ENCODE measurements at regions of chr13 and their contacts with region 1.

Region 1: DNA sequence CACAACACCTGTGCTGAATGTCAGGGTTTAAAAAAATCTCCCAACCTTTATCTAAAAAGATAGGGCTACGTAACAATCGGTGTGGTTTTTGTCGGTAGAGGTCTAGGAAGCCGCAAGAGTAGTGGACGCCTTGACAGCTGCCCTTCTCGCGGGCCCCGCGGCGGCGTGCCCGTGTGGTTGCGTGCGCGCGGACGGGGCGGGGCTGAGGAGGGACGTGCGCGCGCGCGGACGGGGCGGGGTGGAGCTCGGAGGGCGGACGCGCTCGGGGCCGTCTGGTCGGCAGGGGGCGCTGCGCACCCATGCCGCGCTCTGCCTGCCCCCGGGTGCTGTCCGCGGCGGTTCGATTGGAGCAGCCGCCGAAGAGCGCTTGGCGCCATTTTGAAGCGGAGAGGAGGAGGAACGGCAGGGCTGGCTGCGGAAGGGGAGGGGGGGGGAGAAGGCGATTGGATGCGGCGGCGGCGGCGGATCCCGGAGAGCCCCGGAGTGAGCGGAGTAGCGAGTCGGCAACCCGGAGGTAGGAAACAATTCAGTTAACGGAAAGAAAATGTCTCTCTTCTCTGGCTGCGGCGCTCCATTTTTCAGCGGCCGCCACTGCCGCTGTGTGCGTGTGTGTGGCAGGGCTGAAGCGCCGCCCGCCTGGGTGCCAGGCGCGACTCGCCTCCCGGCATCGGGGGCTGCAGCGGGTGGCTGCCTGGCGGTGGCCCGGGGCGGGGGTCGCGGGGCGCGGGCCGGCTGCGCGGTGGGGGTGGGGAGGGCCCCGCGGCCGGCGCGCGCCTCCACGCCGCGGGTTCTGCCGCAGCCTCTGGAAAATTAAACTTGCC is at the start of gene PDS5B:
- DNase-seq: peak; percentile 88 to 99 (median 92)

Region 2: GRCh38 chr13:31909864-31910551 is 676.3 kb before region 1 on chr13:
- intact Hi-C with region 1: loop called (anchors 10 kb)
- DNase-seq: peak in 6 of 10 donors; percentile 22 to 87 (median 54)

Region 3: DNA sequence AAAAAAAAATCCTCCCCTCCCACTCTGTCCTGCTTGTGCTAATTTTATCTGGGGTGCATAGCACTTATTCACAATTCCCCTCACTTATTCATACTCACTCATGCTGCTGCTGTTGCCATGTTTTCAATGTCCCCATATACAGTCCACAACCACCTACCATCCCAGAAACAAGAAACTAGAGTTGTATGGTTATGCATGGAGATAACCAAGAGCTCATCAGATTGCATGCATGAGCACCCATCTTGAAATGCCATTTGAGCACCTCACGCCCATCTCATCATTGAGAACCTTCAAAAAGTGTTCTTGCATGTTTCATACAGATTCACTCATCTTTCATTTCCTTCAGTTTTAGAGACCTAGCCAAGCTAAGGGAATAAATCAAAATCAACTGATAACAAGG is 32.6 kb before region 1 on chr13:
- intact Hi-C with region 1: no loop called
- DNase-seq: no peak

Region 4: DNA sequence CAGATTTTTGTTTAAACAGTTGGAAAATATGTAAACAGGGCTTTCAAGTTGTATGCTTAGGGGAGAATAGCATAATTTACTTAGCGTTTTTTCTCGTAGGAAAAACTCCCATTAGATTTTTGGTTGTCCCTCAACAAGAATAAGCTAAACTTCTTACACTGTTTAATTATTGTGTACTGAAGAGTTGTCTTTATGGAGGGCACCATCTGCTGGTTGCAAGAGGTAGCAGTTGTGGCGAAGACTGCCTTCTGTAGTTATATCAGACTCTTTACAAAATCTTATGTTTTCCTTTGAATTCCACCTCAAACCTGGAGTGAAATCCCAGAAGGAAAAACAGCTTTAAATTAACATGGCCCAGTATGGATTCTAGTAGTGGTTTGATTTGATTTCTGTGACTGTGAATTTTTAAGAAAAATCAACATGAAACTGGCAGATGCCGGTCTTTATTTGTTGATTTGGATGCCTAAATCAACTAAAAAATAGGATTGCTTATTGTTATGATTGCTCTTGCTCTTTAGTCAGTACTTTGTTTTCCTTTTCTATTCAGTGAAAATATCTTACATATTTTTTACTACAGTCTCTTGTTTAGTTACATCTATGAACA is 53.3 kb after region 1 on chr13:
- intact Hi-C with region 1: loop called (anchors 1 kb)
- DNase-seq: peak in 6 of 10 donors; percentile 32 to 90 (median 58)

Region 5: GRCh38 chr13:32650705-32651311 is 64.5 kb after region 1 on chr13:
- intact Hi-C with region 1: loop called (anchors 2 kb)
- DNase-seq: peak in 4 of 10 donors; percentile 19 to 59 (median 40)

Region 6: DNA sequence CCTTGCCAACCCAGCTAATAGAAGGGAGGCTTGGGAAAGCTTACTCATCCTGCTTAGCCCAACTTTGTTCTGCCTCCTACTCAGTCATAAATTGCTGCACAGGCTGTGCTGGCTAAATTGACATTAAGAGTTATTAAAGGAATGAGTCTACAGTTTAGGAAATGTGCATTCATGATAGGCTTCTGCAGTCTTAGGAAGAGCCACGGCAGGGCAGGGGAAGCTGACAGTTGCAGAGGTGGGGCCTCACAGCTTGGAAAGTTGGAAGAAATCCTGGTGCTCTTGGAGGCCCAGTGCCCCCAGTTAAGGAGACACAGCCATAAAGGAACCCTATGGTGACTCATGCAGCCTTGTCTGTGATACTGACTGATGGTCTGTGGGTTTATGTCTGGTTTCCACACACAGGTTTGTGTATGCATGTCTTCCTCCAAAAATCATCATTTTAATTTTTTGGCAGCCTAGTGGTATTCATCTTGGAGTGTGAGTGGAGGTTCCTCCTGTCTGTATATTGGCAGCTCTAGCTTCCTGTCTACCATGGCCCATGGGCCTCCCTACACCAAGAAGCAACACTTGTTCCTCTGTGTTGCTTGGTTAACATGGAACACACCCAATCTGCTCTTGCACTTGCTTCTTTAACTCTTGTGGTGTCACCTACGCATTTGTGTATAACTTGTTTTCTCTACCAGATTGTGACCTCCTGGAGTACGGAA is 294.9 kb after region 1 on chr13:
- intact Hi-C with region 1: no loop called
- DNase-seq: peak in 1 of 10 donors; percentile 78

Region 7: DNA sequence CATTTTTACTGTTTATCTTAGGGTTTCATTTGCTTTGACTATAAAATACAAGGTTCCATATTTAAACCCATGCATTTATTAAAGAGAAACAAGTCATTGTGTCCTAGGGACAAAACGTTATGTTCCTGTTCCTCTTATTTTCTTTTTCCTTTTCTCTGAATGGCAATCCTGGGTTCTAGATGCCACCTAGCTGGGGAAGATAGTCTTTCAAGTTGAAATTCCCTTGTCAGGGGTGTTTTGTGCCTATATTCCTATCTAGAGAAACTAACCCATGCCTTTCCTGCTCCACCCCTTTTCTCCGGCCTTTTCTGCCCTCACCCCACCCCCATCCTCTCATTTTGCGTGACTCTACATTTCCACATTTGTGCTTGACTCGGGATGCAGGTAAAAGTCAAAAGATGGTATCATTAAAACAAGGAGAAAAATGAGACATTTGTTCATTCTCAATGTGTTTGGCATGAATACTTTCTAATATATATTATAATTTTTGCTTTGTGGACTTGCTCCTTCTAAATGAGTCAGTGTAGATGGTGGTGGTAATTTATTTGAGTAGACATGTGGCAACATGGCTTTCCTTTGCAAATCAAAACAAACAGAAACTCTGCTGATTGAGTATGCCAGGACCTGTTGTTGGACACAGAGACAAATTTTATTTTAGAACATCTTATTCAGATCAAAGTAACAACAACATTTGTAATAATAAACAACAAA is 726.0 kb after region 1 on chr13:
- intact Hi-C with region 1: loop called (anchors 2 kb)
- DNase-seq: peak in 1 of 10 donors; percentile 52

Region 8: DNA sequence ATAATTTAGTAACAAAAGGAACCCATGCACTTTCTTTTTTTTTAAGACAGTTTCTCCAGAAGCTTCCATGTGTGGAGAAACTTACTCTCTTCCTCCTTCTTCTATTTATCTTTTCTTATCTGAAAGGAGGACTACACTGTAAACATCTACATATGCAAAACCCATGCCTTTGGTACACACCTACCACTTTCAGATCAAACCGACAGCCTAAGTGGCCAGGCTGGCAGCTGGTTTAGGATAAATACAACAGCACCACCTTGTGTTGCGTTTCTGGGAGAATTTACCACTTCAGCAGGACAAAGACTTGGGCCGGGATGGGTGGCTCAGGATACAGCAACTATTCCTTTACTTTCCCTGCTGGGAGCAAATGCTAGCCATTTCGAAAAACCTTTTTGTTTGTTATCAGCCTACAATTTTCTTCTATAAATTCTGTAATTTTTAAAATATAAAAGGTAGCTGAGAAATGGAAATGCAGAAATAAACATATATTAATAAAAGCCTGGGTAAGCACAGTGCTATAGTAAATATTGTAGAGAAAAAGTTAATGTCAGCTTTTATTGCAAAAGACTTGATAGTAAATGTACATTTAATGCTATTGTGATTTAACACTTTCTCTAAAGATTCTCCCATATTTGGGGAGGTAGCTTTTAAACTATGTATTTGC is 1137.6 kb after region 1 on chr13:
- intact Hi-C with region 1: loop called (anchors 5 kb)
- DNase-seq: peak; percentile 51 to 94 (median 77)

Measured in posterior cingulate gyrus (tissue), 11 donors.